Activated CD4-positive, alpha-beta memory T cell treated with anti-CD3 and anti-CD28 coated beads for 36 hours (primary cell): ENCODE measurements at regions of chr11 and their contacts with region 1.

Region 1: GRCh38 chr11:58524232-58525036 is 16.5 kb upstream of the OR5B21 start:
- DNase-seq: peak; percentile 64
- H3K4me3 Mint-ChIP-seq: peak overlapping the region; percentile 63
- H3K27ac Mint-ChIP-seq: peak overlapping the region; percentile 82
- H3K4me1 Mint-ChIP-seq: peaks cover 47% of the 10 kb centered on the region
- H3K27me3 Mint-ChIP-seq: no peaks in the 10 kb centered on the region

Region 2: GRCh38 chr11:57667736-57668435 is 856.5 kb before region 1 on chr11 and contains the start of gene ZDHHC5:
- CTCF ChIA-PET with region 1: interaction called, 3 read pairs
- POLR2A ChIA-PET with region 1: no interaction called
- intact Hi-C with region 1: loop called (anchors 5 kb)
- DNase-seq: peak; percentile 100
- H3K4me3 Mint-ChIP-seq: peak within 1 kb of the TSS; percentile 83
- H3K27ac Mint-ChIP-seq: peak within 1 kb of the TSS; percentile 100
- H3K4me1 Mint-ChIP-seq: peaks cover 41% of the 10 kb centered on the region
- H3K27me3 Mint-ChIP-seq: no peaks in the 10 kb centered on the region
- total RNA-seq, gene ZDHHC5: 56.8 to 65.5 TPM

Region 3: GRCh38 chr11:58259985-58260384 is 264.4 kb before region 1 on chr11:
- CTCF ChIA-PET with region 1: no interaction called
- POLR2A ChIA-PET with region 1: no interaction called
- intact Hi-C with region 1: no loop called
- DNase-seq: no peak
- H3K4me3 Mint-ChIP-seq: no peak overlapping the region
- H3K27ac Mint-ChIP-seq: no peak overlapping the region
- H3K4me1 Mint-ChIP-seq: no peaks in the 10 kb centered on the region
- H3K27me3 Mint-ChIP-seq: peaks cover 3% of the 10 kb centered on the region

Region 4: GRCh38 chr11:58394195-58394594 is 130.2 kb before region 1 on chr11:
- CTCF ChIA-PET with region 1: no interaction called
- POLR2A ChIA-PET with region 1: no interaction called
- intact Hi-C with region 1: loop called (anchors 10 kb)
- DNase-seq: no peak
- H3K4me3 Mint-ChIP-seq: no peak overlapping the region
- H3K27ac Mint-ChIP-seq: no peak overlapping the region
- H3K4me1 Mint-ChIP-seq: no peaks in the 10 kb centered on the region
- H3K27me3 Mint-ChIP-seq: peaks cover 2% of the 10 kb centered on the region

Region 5: DNA sequence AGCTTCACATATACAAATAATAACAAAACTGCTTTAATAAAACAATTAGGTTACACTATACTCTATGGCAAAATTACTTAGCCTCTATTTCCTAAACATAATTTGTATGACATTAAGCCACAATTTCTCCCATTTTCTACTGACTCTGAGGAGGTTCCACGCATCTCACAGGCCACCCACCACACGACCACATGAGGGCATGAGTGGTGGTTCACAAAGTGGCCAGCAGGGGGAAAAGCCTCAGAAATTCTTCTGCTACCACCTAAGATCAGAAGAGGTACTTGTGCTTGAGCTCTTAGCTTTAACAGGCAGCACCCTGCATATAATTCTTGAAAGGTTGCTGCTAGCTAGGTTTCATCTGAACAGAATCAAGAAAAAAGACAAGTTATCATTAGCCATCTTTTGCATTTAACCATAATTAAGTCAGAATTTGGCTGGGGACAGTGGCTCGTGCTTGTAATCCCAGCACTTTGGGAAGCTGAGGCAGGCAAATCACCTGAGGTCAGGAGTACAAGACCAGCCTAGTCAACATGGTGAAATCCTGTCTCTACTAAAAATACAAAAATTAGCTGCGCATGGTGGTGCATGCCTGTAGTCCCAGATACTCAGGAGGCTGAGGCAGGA is 43.6 kb after region 1 on chr11:
- CTCF ChIA-PET with region 1: interaction called, 32 read pairs
- POLR2A ChIA-PET with region 1: no interaction called
- intact Hi-C with region 1: loop called (anchors 1 kb)
- DNase-seq: peak; percentile 84
- H3K4me3 Mint-ChIP-seq: no peak overlapping the region
- H3K27ac Mint-ChIP-seq: peak overlapping the region; percentile 71
- H3K4me1 Mint-ChIP-seq: peaks cover 60% of the 10 kb centered on the region
- H3K27me3 Mint-ChIP-seq: no peaks in the 10 kb centered on the region

Region 6: DNA sequence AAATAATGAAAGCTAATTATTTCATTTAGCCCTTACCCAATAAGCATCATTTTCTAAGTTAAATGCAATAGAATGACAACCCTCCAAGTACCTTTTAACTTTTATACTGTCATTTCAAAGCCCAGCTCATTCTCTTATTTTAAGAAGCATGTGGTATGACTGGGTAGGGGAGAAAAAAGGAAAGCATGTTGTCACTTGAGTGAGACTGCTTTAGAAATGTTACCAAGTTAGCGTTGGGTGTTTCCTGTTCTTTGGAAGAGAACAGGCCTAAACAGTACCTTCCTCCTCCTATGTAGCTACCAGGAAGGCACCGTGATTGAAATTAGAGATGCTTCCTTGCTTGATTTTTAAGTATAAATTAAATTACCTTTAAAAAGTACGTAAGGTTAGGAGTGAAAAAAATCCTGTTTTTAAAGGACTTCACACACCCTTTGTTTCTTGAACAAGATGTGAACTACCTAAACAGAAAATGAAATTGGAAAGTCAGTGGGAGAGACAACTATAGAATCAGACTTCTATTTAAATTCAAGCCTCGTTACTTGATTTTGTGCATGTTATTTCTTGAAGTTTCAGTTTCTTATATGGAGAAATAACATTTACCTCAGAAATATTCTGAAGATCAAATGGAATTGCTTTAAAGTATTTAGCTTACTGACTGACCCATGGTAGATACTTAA is 97.3 kb after region 1 on chr11:
- CTCF ChIA-PET with region 1: interaction called, 3 read pairs
- POLR2A ChIA-PET with region 1: no interaction called
- intact Hi-C with region 1: loop called (anchors 1 kb)
- DNase-seq: no peak
- H3K4me3 Mint-ChIP-seq: no peak overlapping the region
- H3K27ac Mint-ChIP-seq: no peak overlapping the region
- H3K4me1 Mint-ChIP-seq: peaks cover 16% of the 10 kb centered on the region
- H3K27me3 Mint-ChIP-seq: no peaks in the 10 kb centered on the region

Region 7: GRCh38 chr11:59025097-59025496 is 500.7 kb after region 1 on chr11:
- CTCF ChIA-PET with region 1: no interaction called
- POLR2A ChIA-PET with region 1: no interaction called
- intact Hi-C with region 1: no loop called
- DNase-seq: no peak
- H3K4me3 Mint-ChIP-seq: no peak overlapping the region
- H3K27ac Mint-ChIP-seq: no peak overlapping the region
- H3K4me1 Mint-ChIP-seq: no peaks in the 10 kb centered on the region
- H3K27me3 Mint-ChIP-seq: peaks cover 4% of the 10 kb centered on the region

Region 8: GRCh38 chr11:59152312-59152951 is 628.0 kb after region 1 on chr11:
- CTCF ChIA-PET with region 1: no interaction called
- POLR2A ChIA-PET with region 1: no interaction called
- intact Hi-C with region 1: loop called (anchors 5 kb)
- DNase-seq: peak; percentile 55
- H3K4me3 Mint-ChIP-seq: peak overlapping the region; percentile 53
- H3K27ac Mint-ChIP-seq: peak overlapping the region; percentile 92
- H3K4me1 Mint-ChIP-seq: peaks cover 41% of the 10 kb centered on the region
- H3K27me3 Mint-ChIP-seq: no peaks in the 10 kb centered on the region